Transverse colon (tissue), 4 donors: ENCODE measurements at regions of chr5 and their contacts with region 1.

Region 1: GRCh38 chr5:131453826-131454225 is 181.2 kb downstream of the RAPGEF6 start:
- DNase-seq: no peak
- H3K4me3 ChIP-seq: no peak overlapping the region
- H3K27ac ChIP-seq: no peak overlapping the region
- H3K4me1 ChIP-seq: no peaks in the 10 kb centered on the region
- H3K27me3 ChIP-seq: no peaks in the 10 kb centered on the region
- CTCF ChIP-seq: no peak
- EP300 ChIP-seq: no peak
- POLR2A ChIP-seq: no peak

Region 2: DNA sequence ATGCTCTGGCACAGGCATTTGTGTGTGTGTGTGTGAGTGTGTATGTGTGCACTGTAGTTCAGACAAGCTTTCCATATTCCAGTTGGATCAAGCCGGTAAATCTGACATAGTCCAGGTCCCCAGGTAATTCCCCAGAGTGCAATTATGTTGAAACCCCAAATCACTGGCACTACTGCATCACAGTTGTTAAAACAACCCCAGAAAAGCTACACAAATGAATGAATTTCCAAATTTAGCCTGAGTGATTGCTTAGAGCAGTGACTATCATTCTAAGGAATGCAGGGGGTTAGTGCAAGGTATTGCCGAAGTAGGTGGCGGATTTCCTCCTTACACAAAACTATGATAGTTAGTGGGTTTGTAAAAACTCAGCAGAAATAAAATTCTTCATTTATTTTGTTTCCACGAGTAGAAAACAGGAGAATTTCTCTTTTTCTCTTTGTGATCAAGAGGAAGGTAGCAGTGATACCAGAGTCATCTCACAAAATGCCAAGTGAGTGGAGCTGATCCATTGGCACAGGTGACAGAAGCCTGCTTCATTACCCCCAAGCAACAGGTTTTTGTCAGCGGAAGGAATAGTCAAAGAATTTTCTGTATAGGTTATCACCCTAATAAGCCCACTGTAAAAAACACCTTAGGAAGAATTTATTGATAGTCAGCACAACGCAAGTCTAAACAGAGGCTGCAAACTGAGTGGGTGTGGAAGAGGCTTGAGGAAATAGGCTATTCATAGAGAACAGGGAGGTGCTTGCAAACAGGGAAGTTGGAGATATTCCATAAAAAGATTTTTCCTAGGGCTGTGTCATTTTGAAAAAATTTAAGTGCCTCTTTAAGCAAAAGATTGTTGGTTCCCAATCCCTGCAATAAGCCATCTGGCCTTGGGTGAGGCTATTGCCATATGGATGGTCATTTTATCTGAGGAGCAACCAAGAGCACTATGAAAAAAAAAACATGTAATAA is 1164.4 kb before region 1 on chr5:
- in situ Hi-C with region 1: no loop called
- intact Hi-C with region 1: loop called (anchors 5 kb)
- DNase-seq: no peak
- H3K4me3 ChIP-seq: no peak overlapping the region
- H3K27ac ChIP-seq: peak overlapping the region in 1 of 4 donors; percentile 51
- H3K4me1 ChIP-seq: no peaks in the 10 kb centered on the region
- H3K27me3 ChIP-seq: no peaks in the 10 kb centered on the region
- CTCF ChIP-seq: no peak
- EP300 ChIP-seq: no peak
- POLR2A ChIP-seq: no peak

Region 3: DNA sequence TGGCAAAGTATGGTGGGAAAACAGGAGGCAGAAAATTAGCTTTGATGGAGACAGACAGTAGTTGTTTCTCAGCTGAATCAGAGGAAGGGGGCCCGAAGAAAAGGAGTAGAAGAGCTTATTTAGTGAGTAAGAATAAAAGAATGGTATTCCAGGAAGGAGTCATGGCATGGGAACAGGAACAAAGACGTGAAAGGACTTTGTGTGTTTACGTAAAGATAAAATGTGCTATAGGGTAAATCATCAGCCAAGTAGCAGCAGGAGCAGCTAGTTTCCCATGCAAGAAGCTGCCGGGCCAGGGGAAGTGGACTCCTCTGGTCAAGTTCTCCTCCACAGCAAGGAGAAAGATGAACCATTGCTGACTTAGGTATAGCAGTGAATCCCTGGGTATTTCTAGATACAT is 743.2 kb before region 1 on chr5:
- in situ Hi-C with region 1: no loop called
- intact Hi-C with region 1: no loop called
- DNase-seq: no peak
- H3K4me3 ChIP-seq: no peak overlapping the region
- H3K27ac ChIP-seq: no peak overlapping the region
- H3K4me1 ChIP-seq: no peaks in the 10 kb centered on the region
- H3K27me3 ChIP-seq: no peaks in the 10 kb centered on the region
- CTCF ChIP-seq: no peak
- EP300 ChIP-seq: no peak
- POLR2A ChIP-seq: no peak

Region 4: DNA sequence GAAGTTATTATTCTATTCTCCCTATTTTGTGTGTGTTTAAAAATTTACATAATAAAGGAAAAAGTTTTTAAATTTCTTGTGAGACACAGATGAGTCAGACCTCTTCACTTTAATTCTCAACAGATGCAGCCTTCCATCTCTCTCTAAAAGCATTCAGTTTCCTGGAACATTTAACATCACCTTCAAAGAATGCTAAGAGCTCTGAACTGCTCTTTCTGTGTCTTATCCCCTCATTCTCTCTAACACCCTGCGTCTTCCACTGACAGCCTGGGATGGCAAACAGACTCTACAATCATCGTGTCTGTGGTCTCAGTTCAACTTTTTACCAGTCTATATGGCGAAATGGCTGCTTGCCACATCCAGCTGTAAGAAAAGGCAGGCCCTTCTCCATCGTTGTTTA is 461.7 kb before region 1 on chr5:
- in situ Hi-C with region 1: no loop called
- intact Hi-C with region 1: no loop called
- DNase-seq: no peak
- H3K4me3 ChIP-seq: no peak overlapping the region
- H3K27ac ChIP-seq: no peak overlapping the region
- H3K4me1 ChIP-seq: no peaks in the 10 kb centered on the region
- H3K27me3 ChIP-seq: no peaks in the 10 kb centered on the region
- CTCF ChIP-seq: no peak
- EP300 ChIP-seq: no peak
- POLR2A ChIP-seq: no peak